ENCODE measurements at regions of chr10 and their contacts with region 1.

Region 1: DNA sequence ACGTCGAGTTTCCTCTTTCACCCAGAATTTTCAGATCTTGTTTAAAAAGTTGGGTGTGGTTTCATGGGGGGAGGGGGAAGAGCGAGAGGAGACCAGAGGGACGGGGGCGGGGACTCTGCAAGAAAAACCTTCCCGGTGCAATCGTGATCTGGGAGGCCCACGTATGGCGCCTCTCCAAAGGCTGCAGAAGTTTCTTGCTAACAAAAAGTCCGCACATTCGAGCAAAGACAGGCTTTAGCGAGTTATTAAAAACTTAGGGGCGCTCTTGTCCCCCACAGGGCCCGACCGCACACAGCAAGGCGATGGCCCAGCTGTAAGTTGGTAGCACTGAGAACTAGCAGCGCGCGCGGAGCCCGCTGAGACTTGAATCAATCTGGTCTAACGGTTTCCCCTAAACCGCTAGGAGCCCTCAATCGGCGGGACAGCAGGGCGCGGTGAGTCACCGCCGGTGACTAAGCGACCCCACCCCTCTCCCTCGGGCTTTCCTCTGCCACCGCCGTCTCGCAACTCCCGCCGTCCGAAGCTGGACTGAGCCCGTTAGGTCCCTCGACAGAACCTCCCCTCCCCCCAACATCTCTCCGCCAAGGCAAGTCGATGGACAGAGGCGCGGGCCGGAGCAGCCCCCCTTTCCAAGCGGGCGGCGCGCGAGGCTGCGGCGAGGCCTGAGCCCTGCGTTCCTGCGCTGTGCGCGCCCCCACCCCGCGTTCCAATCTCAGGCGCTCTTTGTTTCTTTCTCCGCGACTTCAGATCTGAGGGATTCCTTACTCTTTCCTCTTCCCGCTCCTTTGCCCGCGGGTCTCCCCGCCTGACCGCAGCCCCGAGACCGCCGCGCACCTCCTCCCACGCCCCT is at the start of gene VIM:
- DNase-seq: peak; percentile 96
- ATAC-seq: peak; percentile 44
- H3K4me3 Mint-ChIP-seq: peak within 1 kb of the TSS; percentile 93
- H3K27ac Mint-ChIP-seq: peak within 1 kb of the TSS; percentile 97
- H3K4me1 Mint-ChIP-seq: peaks cover 46% of the 10 kb centered on the region
- H3K27me3 Mint-ChIP-seq: no peaks in the 10 kb centered on the region
- total RNA-seq, gene VIM: 1,771 to 2,143 TPM

Region 2: GRCh38 chr10:17200912-17201793 is 27.2 kb before region 1 on chr10 and contains the start of gene TRDMT1:
- CTCF ChIA-PET with region 1: interaction called, 51 read pairs
- DNase-seq: peak; percentile 83
- ATAC-seq: peak; percentile 96
- H3K4me3 Mint-ChIP-seq: peak within 1 kb of the TSS; percentile 93
- H3K27ac Mint-ChIP-seq: peak within 1 kb of the TSS; percentile 87
- H3K4me1 Mint-ChIP-seq: peaks cover 55% of the 10 kb centered on the region
- H3K27me3 Mint-ChIP-seq: no peaks in the 10 kb centered on the region
- total RNA-seq, gene TRDMT1: 7.7 to 9.2 TPM

Region 3: DNA sequence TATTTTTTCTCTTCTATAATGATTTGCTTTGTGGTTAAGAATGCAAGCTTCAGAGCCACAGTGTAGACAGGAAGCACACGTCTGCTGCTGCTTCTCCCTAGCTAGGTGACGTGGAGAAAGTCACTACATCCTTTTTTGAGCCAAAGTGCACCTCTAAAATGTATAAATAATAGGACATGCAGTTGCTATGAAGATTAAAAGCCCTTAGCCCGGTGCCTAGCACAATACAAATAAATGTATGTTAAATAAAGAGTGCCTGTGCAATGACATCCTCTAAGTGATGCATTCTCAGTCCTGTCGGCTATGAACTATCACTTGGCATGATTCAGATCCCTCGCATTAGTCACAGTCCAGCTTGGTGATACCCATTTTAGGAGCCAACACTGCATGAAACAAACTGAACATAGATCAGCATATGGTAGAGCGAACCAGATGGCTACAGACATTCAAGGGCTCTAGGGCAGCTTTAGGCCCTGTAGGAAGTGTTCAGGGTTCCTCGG is 22.1 kb before region 1 on chr10:
- CTCF ChIA-PET with region 1: interaction called, 51 read pairs
- DNase-seq: peak; percentile 66
- ATAC-seq: peak; percentile 79
- H3K4me3 Mint-ChIP-seq: peak overlapping the region; percentile 31
- H3K27ac Mint-ChIP-seq: peak overlapping the region; percentile 81
- H3K4me1 Mint-ChIP-seq: peaks cover 58% of the 10 kb centered on the region
- H3K27me3 Mint-ChIP-seq: no peaks in the 10 kb centered on the region

Region 4: GRCh38 chr10:17265468-17265867 is 37.2 kb after region 1 on chr10:
- CTCF ChIA-PET with region 1: no interaction called
- DNase-seq: no peak
- ATAC-seq: no peak
- H3K4me3 Mint-ChIP-seq: no peak overlapping the region
- H3K27ac Mint-ChIP-seq: no peak overlapping the region
- H3K4me1 Mint-ChIP-seq: no peaks in the 10 kb centered on the region
- H3K27me3 Mint-ChIP-seq: peaks cover 21% of the 10 kb centered on the region

Measured in activated CD8-positive, alpha-beta memory T cell treated with anti-CD3 and anti-CD28 coated beads, Interleukin-2, amount 10 ng/mL, durations not matched to agents 7 days and 5 days (primary cell).